CD8-positive, alpha-beta memory T cell (primary cell): ENCODE measurements at regions of chr22 and their contacts with region 1.

Region 1: GRCh38 chr22:39532215-39533071 is at the start of gene RPS19BP1:
- DNase-seq: peak; percentile 98 to 100 (median 99)
- H3K4me3 ChIP-seq: peak within 1 kb of the TSS; percentile 92
- H3K4me3 Mint-ChIP-seq: peak within 1 kb of the TSS; percentile 87 to 97 (median 93)
- H3K27ac ChIP-seq: peak within 1 kb of the TSS; percentile 91
- H3K27ac Mint-ChIP-seq: peak within 1 kb of the TSS; percentile 87 to 99 (median 94)
- H3K4me1 ChIP-seq: peaks cover 57% of the 10 kb centered on the region
- H3K4me1 Mint-ChIP-seq: peaks cover 47 to 63% (median 62%) of the 10 kb centered on the region in 3 donors
- H3K27me3 ChIP-seq: no peaks in the 10 kb centered on the region
- H3K27me3 Mint-ChIP-seq: no peaks in the 10 kb centered on the region
- total RNA-seq, gene RPS19BP1: 158 to 160 TPM

Region 2: DNA sequence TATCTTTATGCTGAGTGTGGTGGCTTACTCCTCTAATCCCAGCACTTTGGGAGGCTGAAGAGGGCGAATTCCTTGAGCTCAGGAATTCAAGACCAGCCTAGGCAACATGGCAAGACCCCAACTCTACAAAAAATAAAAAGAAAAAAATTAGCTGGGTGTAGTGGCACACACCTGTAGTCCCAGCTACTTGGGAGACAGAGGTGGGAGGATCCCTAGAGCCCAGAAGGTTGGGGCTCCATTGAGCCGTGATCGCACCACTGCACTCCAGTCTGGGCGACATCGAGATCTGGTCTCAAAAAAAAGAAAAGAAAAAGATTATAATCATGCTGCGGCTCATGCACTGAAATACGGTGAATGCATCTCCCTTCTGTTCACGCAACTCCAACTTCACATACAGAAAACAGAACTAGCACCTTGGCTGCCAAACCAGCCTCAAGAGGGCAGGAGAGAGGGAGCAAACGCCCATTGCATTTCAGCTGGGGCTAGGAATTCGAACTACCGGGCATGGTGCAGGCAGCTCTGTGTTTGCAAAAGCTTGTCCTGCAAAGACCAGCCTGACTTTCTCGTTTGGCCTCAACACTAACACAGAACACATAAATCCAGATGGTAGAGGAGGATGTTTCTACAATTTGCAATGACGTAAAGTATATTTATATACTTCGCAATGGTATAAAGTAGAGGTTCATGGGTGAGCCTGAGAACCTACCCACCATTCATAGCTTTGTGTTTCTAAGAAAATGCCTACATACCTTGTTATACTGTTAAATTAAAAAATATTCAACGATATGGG is 189.0 kb before region 1 on chr22:
- CTCF ChIA-PET with region 1: interaction called, 13 read pairs
- POLR2A ChIA-PET with region 1: interaction called, 4 read pairs
- DNase-seq: peak; percentile 24 to 70 (median 45)
- H3K4me3 ChIP-seq: no peak overlapping the region
- H3K4me3 Mint-ChIP-seq: no peak overlapping the region
- H3K27ac ChIP-seq: no peak overlapping the region
- H3K27ac Mint-ChIP-seq: peak overlapping the region in 1 of 8 donors; percentile 4
- H3K4me1 ChIP-seq: no peaks in the 10 kb centered on the region
- H3K4me1 Mint-ChIP-seq: peaks cover 3 to 5% (median 5%) of the 10 kb centered on the region in 3 donors
- H3K27me3 ChIP-seq: no peaks in the 10 kb centered on the region
- H3K27me3 Mint-ChIP-seq: peaks cover 8 to 18% of the 10 kb centered on the region in 2 donors

Region 3: DNA sequence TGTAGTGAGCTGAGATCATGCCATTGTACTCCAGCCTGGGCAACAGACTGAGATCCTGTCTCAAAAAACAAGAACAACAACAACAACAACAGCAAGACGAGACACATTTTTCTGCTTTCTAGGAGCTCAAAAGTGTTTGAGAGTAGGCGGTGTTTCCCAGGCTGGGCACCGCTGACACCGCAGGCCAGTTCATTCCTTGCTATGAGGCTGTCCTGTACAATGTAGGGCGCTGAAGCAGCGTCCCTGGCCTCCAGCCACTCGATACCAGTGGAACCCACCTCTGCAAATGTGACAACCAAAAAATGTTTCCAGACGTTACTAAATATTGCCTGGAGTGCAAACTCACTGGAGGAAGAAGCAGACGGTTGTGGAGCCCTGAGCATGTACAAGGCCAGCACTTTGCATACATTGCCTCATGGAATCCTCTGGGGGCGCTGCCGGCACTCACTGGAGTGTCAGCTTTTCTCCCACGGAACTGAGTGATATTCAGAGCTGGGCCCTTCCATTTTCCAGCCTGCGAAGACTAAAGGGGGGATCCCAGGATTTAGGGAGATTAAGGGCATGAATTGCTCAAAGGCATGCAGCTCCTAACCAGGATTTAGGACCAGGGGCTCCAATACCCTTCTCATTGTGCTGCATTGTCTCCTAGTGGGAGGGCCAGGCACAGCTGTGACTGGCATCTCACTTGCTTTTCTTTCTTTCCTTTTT is 36.2 kb before region 1 on chr22:
- CTCF ChIA-PET with region 1: interaction called, 57 read pairs
- POLR2A ChIA-PET with region 1: interaction called, 8 read pairs
- DNase-seq: peak in 3 of 5 donors; percentile 16 to 59 (median 36)
- H3K4me3 ChIP-seq: no peak overlapping the region
- H3K4me3 Mint-ChIP-seq: peak overlapping the region in 1 of 7 donors; percentile 64
- H3K27ac ChIP-seq: no peak overlapping the region
- H3K27ac Mint-ChIP-seq: no peak overlapping the region
- H3K4me1 ChIP-seq: peaks cover 6% of the 10 kb centered on the region
- H3K4me1 Mint-ChIP-seq: no peaks in the 10 kb centered on the region
- H3K27me3 ChIP-seq: no peaks in the 10 kb centered on the region
- H3K27me3 Mint-ChIP-seq: no peaks in the 10 kb centered on the region

Region 4: GRCh38 chr22:39520054-39520891 is 12.2 kb before region 1 on chr22 and contains the start of gene ATF4:
- CTCF ChIA-PET with region 1: interaction called, 31 read pairs
- POLR2A ChIA-PET with region 1: interaction called, 33 read pairs
- DNase-seq: peak; percentile 94 to 99 (median 96)
- H3K4me3 ChIP-seq: peak within 1 kb of the TSS; percentile 90
- H3K4me3 Mint-ChIP-seq: peak within 1 kb of the TSS; percentile 89 to 99 (median 96)
- H3K27ac ChIP-seq: peak within 1 kb of the TSS; percentile 80
- H3K27ac Mint-ChIP-seq: peak within 1 kb of the TSS; percentile 95 to 100 (median 98)
- H3K4me1 ChIP-seq: peaks cover 39% of the 10 kb centered on the region
- H3K4me1 Mint-ChIP-seq: peaks cover 47 to 56% (median 51%) of the 10 kb centered on the region in 3 donors
- H3K27me3 ChIP-seq: no peaks in the 10 kb centered on the region
- H3K27me3 Mint-ChIP-seq: peaks cover 0 to 14% of the 10 kb centered on the region in 2 donors
- total RNA-seq, gene ATF4: 757 to 758 TPM

Region 5: GRCh38 chr22:39943337-39943736 is 410.9 kb after region 1 on chr22:
- CTCF ChIA-PET with region 1: interaction called, 15 read pairs
- POLR2A ChIA-PET with region 1: no interaction called
- DNase-seq: peak in 2 of 5 donors; percentile 52 to 66
- H3K4me3 ChIP-seq: no peak overlapping the region
- H3K4me3 Mint-ChIP-seq: peak overlapping the region; percentile 7 to 80 (median 68)
- H3K27ac ChIP-seq: peak overlapping the region; percentile 1
- H3K27ac Mint-ChIP-seq: peak overlapping the region in 7 of 8 donors; percentile 83 to 96 (median 94)
- H3K4me1 ChIP-seq: peaks cover 96% of the 10 kb centered on the region
- H3K4me1 Mint-ChIP-seq: peaks cover 91 to 98% (median 96%) of the 10 kb centered on the region in 3 donors
- H3K27me3 ChIP-seq: no peaks in the 10 kb centered on the region
- H3K27me3 Mint-ChIP-seq: no peaks in the 10 kb centered on the region

Region 6: DNA sequence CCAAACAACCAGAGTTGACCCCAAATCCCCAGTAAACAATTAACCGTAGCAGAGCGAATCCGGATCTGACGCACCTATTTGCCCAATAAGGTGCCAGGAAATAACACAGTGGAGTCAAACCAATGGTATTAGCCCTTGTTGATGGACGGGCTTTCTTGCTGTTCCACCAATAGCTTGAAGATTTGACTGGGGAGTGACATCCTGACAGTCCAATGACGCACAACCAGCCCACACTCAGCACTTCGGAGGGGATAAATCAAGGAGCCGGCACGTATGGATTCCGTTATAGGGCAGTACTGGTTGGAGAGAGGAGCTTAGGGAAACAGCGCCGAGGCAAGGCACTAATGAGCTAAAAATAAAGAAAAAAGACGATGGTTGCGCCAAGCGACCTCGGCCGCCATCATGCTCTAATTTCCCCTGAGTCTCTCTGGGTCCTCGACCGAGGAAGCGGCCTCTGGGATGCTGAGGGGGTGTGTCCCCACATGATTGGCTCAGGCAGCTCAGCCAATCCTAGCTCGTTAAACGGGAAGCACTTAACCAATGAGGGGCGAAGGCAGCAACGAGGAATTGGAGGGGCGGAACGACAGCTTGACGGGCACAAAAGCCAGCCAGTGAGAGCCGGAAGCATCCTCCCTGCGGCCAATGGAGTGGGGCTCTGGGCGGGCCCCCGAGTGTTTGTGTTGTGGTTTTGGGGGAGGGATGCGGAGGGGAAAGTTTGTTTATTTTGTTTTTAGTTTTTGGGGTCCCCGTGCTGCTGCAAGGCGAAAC is 511.8 kb after region 1 on chr22:
- CTCF ChIA-PET with region 1: interaction called, 12 read pairs
- POLR2A ChIA-PET with region 1: interaction called, 11 read pairs
- DNase-seq: peak; percentile 95 to 99 (median 99)
- H3K4me3 ChIP-seq: peak overlapping the region; percentile 83
- H3K4me3 Mint-ChIP-seq: peak overlapping the region; percentile 91 to 99 (median 97)
- H3K27ac ChIP-seq: peak overlapping the region; percentile 97
- H3K27ac Mint-ChIP-seq: peak overlapping the region; percentile 98 to 100 (median 100)
- H3K4me1 ChIP-seq: peaks cover 41% of the 10 kb centered on the region
- H3K4me1 Mint-ChIP-seq: peaks cover 35 to 47% (median 47%) of the 10 kb centered on the region in 3 donors
- H3K27me3 ChIP-seq: no peaks in the 10 kb centered on the region
- H3K27me3 Mint-ChIP-seq: peaks cover 6 to 8% of the 10 kb centered on the region in 2 donors